Mammary epithelial cell (primary cell): ENCODE measurements at regions of chr1 and their contacts with region 1.

Region 1: DNA sequence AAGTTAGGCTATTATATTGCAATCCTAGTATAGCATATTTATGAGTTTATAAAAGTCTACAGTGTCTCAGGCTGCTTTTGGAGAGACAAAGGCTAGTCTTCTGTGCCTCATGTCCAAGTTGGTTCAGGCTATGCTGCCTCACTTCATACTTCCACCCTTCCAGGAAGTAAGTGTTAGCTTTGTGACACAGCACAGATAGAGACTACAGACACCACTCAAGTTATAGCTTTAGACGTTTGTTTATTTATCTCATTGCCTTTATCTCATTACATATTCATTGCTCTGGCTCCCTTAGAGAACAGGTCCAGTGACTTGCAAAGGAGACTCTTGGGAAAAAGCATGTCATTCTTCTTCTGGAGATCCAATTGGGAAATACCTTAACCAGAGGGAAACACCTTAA is 22.6 kb upstream of the GBP4 start:
- DNase-seq: no peak
- H3K4me3 ChIP-seq: no peak overlapping the region
- H3K27ac ChIP-seq: no peak overlapping the region
- H3K4me1 ChIP-seq: no peaks in the 10 kb centered on the region
- H3K27me3 ChIP-seq: no peaks in the 10 kb centered on the region
- CTCF ChIP-seq: no peak

Region 2: GRCh38 chr1:89198491-89199072 is 22.8 kb before region 1 on chr1 and contains the start of gene GBP4:
- CTCF ChIA-PET with region 1: no interaction called
- dilution Hi-C with region 1: no loop called
- in situ Hi-C with region 1: no loop called
- intact Hi-C with region 1: no loop called
- DNase-seq: peak; percentile 25
- H3K4me3 ChIP-seq: peak within 1 kb of the TSS; percentile 17 to 34 (median 19)
- H3K27ac ChIP-seq: no peak within 1 kb of the TSS
- H3K4me1 ChIP-seq: no peaks in the 10 kb centered on the region
- H3K27me3 ChIP-seq: no peaks in the 10 kb centered on the region
- CTCF ChIP-seq: no peak
- total RNA-seq, gene GBP4: not detected

Region 3: GRCh38 chr1:89254658-89255287 is 33.4 kb after region 1 on chr1:
- CTCF ChIA-PET with region 1: no interaction called
- dilution Hi-C with region 1: loop called (anchors 5 kb)
- in situ Hi-C with region 1: no loop called
- intact Hi-C with region 1: no loop called
- DNase-seq: no peak
- H3K4me3 ChIP-seq: no peak overlapping the region
- H3K27ac ChIP-seq: no peak overlapping the region
- H3K4me1 ChIP-seq: no peaks in the 10 kb centered on the region
- H3K27me3 ChIP-seq: peaks cover 3% of the 10 kb centered on the region
- CTCF ChIP-seq: no peak

Region 4: GRCh38 chr1:89310505-89310904 is 89.2 kb after region 1 on chr1:
- CTCF ChIA-PET with region 1: no interaction called
- dilution Hi-C with region 1: loop called (anchors 5 kb)
- in situ Hi-C with region 1: no loop called
- intact Hi-C with region 1: no loop called
- DNase-seq: no peak
- H3K4me3 ChIP-seq: no peak overlapping the region
- H3K27ac ChIP-seq: no peak overlapping the region
- H3K4me1 ChIP-seq: peaks cover 30% of the 10 kb centered on the region
- H3K27me3 ChIP-seq: no peaks in the 10 kb centered on the region
- CTCF ChIP-seq: no peak